Left ventricle myocardium inferior (tissue), 1 donor: ENCODE measurements at regions of chr2 and their contacts with region 1.

Region 1: DNA sequence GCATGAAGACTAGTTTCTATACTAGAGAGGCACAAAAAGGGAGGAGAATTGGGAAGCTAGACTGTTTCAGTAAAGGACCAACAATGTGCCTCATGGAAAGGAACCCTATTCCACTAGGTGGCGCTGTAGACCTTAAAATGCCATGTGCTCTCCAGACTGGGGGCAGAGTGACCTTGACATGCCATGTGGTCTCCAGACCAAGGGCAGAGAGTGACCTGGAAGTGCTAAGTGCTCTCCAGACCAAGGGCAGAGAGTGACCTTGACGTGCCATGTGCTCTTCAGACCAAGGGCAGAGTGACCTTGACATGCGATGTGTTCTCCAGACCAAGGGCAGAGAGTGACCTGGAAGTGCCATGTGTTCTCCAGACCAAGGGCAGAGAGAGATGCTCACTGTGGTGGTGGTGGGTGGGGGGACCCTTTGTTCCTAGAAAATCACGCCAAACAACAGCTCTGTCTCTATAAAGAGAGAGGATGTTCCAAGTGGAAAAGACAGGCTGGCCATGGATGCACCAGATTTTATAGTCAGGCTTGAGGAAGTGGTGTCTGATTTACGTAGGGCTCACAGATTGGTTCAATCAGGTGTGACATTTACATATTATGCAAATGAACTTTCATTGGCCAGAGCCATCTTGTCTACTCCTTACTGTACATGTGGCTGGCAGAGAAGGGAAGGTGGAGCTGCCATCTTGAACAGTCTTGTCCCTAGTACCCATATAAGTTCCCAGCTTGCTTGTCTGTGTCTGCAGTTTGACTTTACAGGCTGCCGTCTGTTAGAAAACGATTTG is 344.0 kb upstream of the DDX18 start:
- DNase-seq: no peak
- H3K4me3 ChIP-seq: no peak overlapping the region
- H3K27ac ChIP-seq: no peak overlapping the region
- H3K4me1 ChIP-seq: no peaks in the 10 kb centered on the region
- H3K27me3 ChIP-seq: no peaks in the 10 kb centered on the region
- CTCF ChIP-seq: peak; percentile 56

Region 2: GRCh38 chr2:117785740-117786139 is 315.2 kb after region 1 on chr2:
- intact Hi-C with region 1: loop called (anchors 10 kb)
- DNase-seq: no peak
- H3K4me3 ChIP-seq: no peak overlapping the region
- H3K27ac ChIP-seq: no peak overlapping the region
- H3K4me1 ChIP-seq: no peaks in the 10 kb centered on the region
- H3K27me3 ChIP-seq: no peaks in the 10 kb centered on the region
- CTCF ChIP-seq: peak; percentile 69

Region 3: GRCh38 chr2:117801826-117802225 is 331.3 kb after region 1 on chr2:
- intact Hi-C with region 1: no loop called
- DNase-seq: no peak
- H3K4me3 ChIP-seq: no peak overlapping the region
- H3K27ac ChIP-seq: no peak overlapping the region
- H3K4me1 ChIP-seq: no peaks in the 10 kb centered on the region
- H3K27me3 ChIP-seq: peaks cover 33% of the 10 kb centered on the region
- CTCF ChIP-seq: no peak